ENCODE measurements at regions of chr13 and their contacts with region 1.

Region 1: DNA sequence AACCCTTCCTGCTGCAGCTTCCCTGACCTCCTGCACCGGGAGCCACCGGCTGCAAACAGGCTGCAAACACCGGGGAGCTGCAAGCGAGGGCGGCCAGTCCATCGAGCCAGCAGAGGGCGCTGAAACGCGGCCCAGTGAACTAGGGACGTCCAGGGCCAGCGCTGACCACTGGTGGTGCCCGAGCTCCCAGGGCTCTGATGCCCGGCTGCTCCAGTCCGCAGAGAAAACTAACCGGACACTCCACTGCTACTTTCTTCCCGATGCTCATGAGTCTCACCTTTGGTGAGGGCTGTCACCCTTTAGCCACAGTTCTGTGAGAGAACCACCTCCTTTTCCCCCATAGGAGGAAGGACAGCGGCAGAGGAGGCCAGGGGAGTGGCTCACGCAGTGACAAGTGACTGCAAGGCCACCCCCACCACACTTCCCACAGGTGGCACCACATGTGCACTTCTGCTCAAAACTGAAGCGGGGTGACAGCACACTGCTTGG is 82.8 kb upstream of the MTIF3 start:
- DNase-seq: peak; percentile 79 to 90
- ATAC-seq: peak; percentile 90 to 98 (median 97)
- H3K4me3 ChIP-seq: peak overlapping the region in 8 of 10 donors; percentile 12 to 43 (median 36)
- H3K27ac ChIP-seq: no peak overlapping the region
- H3K4me1 ChIP-seq: peaks cover 0 to 8% (median 0%) of the 10 kb centered on the region in 9 donors
- H3K27me3 ChIP-seq: peaks cover 0 to 5% (median 0%) of the 10 kb centered on the region in 7 donors
- CTCF ChIP-seq: peak; percentile 82 to 98 (median 94)

Region 2: GRCh38 chr13:27374650-27375049 is 158.5 kb before region 1 on chr13:
- intact Hi-C with region 1: loop called in 6 of 10 experiments (anchors 2 to 10 kb)
- DNase-seq: peak in 1 of 2 donors; percentile 62
- ATAC-seq: peak; percentile 89 to 97 (median 92)
- H3K4me3 ChIP-seq: no peak overlapping the region
- H3K27ac ChIP-seq: no peak overlapping the region
- H3K4me1 ChIP-seq: peaks cover 0 to 4% (median 0%) of the 10 kb centered on the region in 9 donors
- H3K27me3 ChIP-seq: peaks cover 0 to 68% (median 35%) of the 10 kb centered on the region in 7 donors
- CTCF ChIP-seq: peak; percentile 47 to 86 (median 75)

Region 3: GRCh38 chr13:27406178-27406939 is 126.8 kb before region 1 on chr13:
- intact Hi-C with region 1: loop called in 1 of 10 experiments (anchors 10 kb)
- DNase-seq: no peak
- ATAC-seq: peak in 4 of 8 donors; percentile 32 to 56 (median 48)
- H3K4me3 ChIP-seq: no peak overlapping the region
- H3K27ac ChIP-seq: no peak overlapping the region
- H3K4me1 ChIP-seq: peaks cover 0 to 15% (median 13%) of the 10 kb centered on the region in 9 donors
- H3K27me3 ChIP-seq: peaks cover 0 to 9% (median 0%) of the 10 kb centered on the region in 7 donors
- CTCF ChIP-seq: peak; percentile 14 to 71 (median 58)

Region 4: DNA sequence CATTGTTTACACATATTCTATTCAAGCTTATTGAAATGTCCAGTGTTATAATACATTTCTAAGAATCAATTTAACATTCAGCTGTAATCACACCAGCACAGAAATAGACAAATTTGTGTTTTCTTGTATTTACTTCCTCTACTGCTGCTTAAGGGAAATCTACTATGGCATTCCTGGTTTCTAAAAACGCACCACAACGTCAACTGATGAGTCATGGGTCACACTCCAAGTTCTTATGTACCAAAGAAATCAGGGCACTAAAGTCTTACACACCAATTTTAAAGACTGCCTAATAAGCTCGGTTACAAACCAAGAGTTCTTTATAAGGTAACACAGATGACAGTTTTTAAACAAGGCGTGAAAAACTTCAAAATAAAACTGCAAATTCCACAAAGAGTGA is 73.9 kb after region 1 on chr13:
- intact Hi-C with region 1: no loop called
- DNase-seq: peak in 1 of 2 donors; percentile 23
- ATAC-seq: peak in 7 of 8 donors; percentile 52 to 91 (median 76)
- H3K4me3 ChIP-seq: no peak overlapping the region
- H3K27ac ChIP-seq: peak overlapping the region in 9 of 10 donors; percentile 1 to 68 (median 61)
- H3K4me1 ChIP-seq: peaks cover 0 to 56% (median 33%) of the 10 kb centered on the region in 9 donors
- H3K27me3 ChIP-seq: no peaks in the 10 kb centered on the region
- CTCF ChIP-seq: no peak

Region 5: DNA sequence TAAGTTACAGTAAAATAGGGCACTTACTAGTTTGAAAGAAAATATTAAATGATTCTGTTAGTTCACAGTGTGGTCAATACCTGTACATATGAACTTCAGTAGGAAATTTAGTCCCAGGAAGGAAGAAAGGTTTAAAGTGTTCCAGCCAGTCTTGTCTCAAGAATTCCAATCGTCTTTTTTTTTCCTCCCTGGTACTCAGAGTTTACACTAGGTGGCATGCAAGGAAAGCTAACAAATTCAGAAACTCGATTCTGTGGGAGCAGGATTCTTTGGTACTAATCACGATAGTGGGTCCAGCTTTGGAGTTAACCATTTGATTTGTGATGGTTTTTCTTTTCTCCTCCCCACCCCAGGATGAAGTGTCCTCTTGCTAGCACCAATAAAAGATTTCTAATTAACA is 132.1 kb after region 1 on chr13:
- intact Hi-C with region 1: loop called in 2 of 10 experiments (anchors 10 kb)
- DNase-seq: no peak
- ATAC-seq: no peak
- H3K4me3 ChIP-seq: no peak overlapping the region
- H3K27ac ChIP-seq: no peak overlapping the region
- H3K4me1 ChIP-seq: peaks cover 0 to 49% (median 13%) of the 10 kb centered on the region in 9 donors
- H3K27me3 ChIP-seq: no peaks in the 10 kb centered on the region
- CTCF ChIP-seq: peak in 6 of 9 donors; percentile 10 to 45 (median 34)

Region 6: DNA sequence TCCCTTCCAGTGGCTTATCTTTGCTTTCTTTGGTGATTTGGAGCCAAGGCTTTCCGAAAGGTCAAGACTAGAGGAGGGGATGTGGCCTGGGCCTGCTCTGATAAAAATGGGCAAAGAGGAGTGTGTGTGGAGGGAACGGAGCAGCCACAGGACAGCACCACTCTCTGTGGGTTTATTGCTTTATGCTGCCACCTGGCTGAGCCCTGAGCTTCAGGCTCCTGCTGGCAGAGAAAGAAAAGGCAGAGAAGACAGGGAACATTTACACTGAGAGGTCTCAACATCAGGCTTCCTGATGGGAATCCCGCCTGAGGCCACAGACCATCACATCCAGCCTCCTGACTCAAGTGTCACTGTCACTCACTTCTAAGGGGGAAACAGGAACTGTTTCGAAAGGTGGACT is 249.9 kb after region 1 on chr13:
- intact Hi-C with region 1: loop called in 4 of 10 experiments (anchors 2 to 10 kb)
- DNase-seq: no peak
- ATAC-seq: peak in 5 of 8 donors; percentile 52 to 68 (median 58)
- H3K4me3 ChIP-seq: no peak overlapping the region
- H3K27ac ChIP-seq: no peak overlapping the region
- H3K4me1 ChIP-seq: no peaks in the 10 kb centered on the region
- H3K27me3 ChIP-seq: peaks cover 0 to 79% (median 66%) of the 10 kb centered on the region in 7 donors
- CTCF ChIP-seq: peak in 8 of 9 donors; percentile 17 to 61 (median 48)

Region 7: GRCh38 chr13:27980280-27980998 is 447.2 kb after region 1 on chr13:
- intact Hi-C with region 1: loop called in 4 of 10 experiments (anchors 10 kb)
- DNase-seq: no peak
- ATAC-seq: no peak
- H3K4me3 ChIP-seq: no peak overlapping the region
- H3K27ac ChIP-seq: no peak overlapping the region
- H3K4me1 ChIP-seq: peaks cover 0 to 37% (median 26%) of the 10 kb centered on the region in 9 donors
- H3K27me3 ChIP-seq: peaks cover 64 to 99% (median 97%) of the 10 kb centered on the region in 7 donors
- CTCF ChIP-seq: no peak

Measured in heart right ventricle (tissue), 16 donors.